AG04449 (cell line): ENCODE measurements at regions of chr2 and their contacts with region 1.

Region 1: GRCh38 chr2:173210270-173211196 is 134.9 kb downstream of the MAP3K20 start:
- DNase-seq: peak; percentile 86
- H3K4me3 ChIP-seq: no peak overlapping the region
- CTCF ChIP-seq: peak; percentile 84

Region 2: DNA sequence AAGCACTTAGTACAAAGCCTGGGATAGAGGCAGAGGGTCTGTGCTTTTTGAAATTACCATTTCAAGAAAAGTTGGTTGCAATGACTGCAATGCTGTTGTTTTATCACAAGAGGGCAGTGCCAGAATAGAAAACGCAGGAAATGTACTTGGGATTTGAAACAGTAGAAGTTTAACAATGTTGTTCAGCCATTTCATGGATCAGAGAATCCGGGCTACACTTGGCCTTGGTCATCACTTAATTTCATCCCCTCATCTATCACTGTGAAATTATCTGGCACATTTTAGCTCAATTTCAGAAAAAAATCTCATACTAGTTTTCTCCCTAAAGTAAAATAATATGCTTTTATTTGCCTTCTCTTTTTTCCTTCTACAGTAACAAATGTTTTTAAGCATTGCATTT is 404.0 kb before region 1 on chr2:
- CTCF ChIA-PET with region 1: interaction called, 13 read pairs
- POLR2A ChIA-PET with region 1: no interaction called
- DNase-seq: no peak
- H3K4me3 ChIP-seq: no peak overlapping the region
- CTCF ChIP-seq: peak; percentile 64

Region 3: DNA sequence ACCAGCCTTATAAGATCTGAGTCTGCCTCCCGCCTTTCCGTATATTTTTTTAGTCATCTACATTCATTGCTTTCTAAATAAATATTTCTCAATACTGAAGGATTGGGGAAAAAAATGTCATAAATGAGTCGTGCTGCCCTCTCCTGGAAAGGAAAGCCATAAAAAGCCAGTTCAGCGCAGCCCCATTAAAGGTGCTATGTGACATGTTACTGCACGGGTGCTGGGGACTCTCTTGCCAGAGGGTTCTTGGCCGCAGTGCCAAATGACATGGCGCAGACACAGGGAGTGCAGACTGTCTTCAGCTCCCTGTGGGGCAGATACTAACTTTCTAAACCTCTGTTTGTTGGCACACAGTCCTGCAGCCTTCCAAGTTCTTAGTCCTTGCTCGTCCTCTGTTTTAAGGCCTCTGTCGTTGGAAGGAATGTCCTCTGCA is 188.6 kb before region 1 on chr2:
- CTCF ChIA-PET with region 1: interaction called, 678 read pairs
- POLR2A ChIA-PET with region 1: no interaction called
- DNase-seq: no peak
- H3K4me3 ChIP-seq: no peak overlapping the region
- CTCF ChIP-seq: peak; percentile 23

Region 4: GRCh38 chr2:173064151-173064805 is 146.3 kb before region 1 on chr2:
- CTCF ChIA-PET with region 1: interaction called, 12 read pairs
- POLR2A ChIA-PET with region 1: no interaction called
- DNase-seq: no peak
- H3K4me3 ChIP-seq: no peak overlapping the region
- CTCF ChIP-seq: no peak

Region 5: GRCh38 chr2:173090973-173091660 is 119.4 kb before region 1 on chr2:
- CTCF ChIA-PET with region 1: interaction called, 16 read pairs
- POLR2A ChIA-PET with region 1: no interaction called
- DNase-seq: no peak
- H3K4me3 ChIP-seq: no peak overlapping the region
- CTCF ChIP-seq: no peak

Region 6: GRCh38 chr2:173199294-173199693 is 11.2 kb before region 1 on chr2:
- CTCF ChIA-PET with region 1: interaction called, 66 read pairs
- POLR2A ChIA-PET with region 1: no interaction called
- DNase-seq: no peak
- H3K4me3 ChIP-seq: no peak overlapping the region
- CTCF ChIP-seq: no peak